KBM-7 (cell line): ENCODE measurements at regions of chr6 and their contacts with region 1.

Region 1: DNA sequence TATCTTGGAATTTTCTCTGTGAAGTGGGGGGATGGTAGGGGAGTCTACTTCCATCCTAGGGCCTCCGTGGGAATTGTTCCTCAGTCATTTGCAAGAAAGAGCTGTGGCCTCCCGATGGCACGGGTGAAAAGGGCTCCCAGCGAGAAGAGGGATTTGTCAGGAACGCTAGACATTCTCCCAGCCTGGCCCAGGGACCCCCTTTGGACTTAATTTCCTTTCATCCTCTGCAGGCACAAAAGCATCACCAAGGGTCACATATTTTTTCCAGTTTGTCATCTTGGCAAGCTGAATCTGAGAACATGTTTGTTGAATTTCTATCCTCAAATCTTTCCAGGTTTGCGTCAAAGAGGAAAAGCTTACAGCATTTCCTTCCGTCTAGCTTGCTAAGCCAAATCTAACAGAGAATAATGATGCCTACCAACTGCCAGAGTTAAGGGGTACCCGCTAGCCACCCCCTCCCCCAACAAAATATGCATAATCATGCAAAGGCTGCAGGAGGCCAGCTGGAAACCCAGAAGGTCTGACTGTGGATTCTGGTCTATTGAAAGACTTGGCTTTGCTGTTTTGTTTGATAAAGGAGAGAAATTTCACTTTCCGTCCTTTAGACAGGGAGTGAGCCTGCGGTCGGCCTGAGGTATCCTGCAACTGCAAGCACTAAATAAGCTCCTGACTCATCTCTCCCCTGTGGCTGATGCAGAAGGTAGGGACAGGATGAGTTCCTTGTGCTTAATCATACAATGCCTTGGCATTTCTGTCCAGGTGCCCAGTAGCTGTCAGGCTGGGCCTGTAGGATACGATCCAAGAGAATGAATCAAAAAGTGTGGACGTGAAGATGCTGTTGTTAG is 23.1 kb downstream of the PSMG4 start:
- DNase-seq: no peak

Region 2: DNA sequence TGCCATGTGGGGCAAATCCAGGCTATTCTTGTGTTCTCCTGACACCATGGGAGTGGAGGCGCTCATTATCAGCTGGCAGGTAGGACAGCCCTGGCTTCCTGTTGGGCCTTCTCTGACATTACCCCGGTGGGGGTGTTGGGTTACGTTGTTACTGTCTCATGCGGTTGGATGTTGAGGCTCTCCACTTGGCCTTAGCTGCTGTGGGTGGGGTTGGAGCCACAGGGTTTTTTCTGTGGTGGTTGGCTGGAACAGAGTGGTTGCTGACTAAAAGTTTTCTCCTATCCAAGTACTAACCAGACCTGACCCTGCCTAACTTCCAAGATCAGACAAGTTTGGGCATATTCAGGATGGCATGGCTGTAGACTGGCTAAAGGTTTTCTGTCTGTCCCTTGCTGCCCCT is 193.4 kb before region 1 on chr6:
- in situ Hi-C with region 1: no loop called
- DNase-seq: no peak

Region 3: DNA sequence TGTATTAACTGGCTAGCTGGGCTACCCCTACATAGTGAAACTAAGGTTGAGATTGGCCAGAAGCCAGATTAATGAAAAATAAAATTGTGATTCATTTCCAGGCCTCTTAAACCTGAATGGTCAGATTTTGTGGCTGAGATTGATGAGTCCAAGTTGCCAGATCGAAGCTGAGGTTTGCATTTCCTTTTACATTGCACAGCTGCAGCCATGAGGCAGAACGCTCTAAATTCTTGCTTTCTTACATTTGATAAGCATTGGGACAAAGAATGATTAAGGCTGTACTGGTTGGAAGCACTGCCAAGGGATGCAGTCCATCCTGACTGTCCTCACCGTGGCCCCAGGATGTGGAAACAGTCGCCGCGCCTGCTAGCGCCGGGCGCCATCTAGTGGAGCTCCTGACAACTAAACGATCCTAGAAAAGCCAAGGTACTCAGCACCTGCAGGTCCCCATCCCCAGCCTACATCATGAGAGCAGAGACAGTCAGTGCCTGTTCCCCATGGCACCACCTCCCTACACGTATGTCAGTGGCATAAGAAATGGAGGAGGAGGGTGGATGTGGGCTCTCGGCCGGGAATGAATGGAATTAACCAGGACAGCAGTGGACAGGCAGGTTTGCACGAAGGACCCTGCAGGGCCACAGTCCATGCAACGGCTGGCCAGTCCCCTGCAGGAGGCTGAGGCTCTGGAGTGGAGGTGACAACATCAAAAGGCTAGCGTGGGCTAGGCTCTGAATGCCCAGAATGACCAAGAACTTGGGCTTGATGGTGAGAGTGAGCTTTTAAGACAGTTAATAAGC is 450.7 kb after region 1 on chr6:
- in situ Hi-C with region 1: loop called (anchors 10 kb)
- DNase-seq: peak; percentile 58

Region 4: GRCh38 chr6:3977875-3978711 is 696.2 kb after region 1 on chr6:
- in situ Hi-C with region 1: loop called (anchors 25 kb)
- DNase-seq: peak; percentile 74